ENCODE measurements at regions of chr20 and their contacts with region 1.

Region 1: DNA sequence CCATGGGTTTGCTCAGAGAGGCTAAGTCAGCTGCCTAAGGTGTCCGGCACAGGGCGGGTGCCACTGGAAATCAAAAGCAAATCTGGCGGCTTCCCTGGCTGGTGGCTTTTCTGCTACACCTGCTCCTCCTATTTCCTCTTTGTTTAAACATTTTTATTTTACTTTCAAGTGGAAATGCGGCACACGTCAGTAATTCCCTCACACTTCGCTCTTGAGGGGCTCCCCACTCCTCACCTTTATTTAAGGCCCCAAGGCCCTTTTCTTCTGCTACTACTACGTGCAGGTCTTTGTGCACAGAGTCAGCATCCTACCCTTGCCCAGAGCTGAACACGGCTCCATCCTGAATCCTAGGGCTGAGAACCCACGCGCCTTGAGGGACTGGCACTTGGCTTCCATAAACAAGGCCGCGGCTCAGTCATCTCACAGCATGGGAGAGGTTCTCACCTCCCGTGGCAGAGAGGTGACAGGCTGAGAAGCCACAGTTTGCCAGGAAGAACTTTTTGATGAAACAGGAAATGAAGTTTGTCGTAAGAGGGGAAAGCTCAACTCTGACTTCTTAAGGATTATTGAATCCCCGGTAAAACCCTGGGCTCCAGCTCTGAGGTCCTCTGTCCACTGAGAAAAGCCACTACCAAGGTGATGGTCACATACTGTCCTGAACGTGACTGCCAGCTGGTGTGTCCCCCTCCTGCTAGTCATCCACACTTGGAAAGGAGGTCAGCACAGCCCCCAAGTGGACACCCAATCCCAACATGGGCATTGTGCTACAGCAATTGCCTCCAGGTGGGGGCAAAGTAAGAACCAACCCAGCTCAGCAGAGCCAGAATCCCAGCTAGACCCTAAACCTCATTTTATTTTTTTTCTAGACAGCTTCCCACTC is 48.0 kb downstream of the NFATC2 start:
- DNase-seq: peak; percentile 61
- ATAC-seq: peak; percentile 40
- H3K4me3 Mint-ChIP-seq: peak overlapping the region; percentile 45
- H3K27ac Mint-ChIP-seq: peak overlapping the region; percentile 68
- H3K4me1 Mint-ChIP-seq: peaks cover 92% of the 10 kb centered on the region
- H3K27me3 Mint-ChIP-seq: no peaks in the 10 kb centered on the region

Region 2: GRCh38 chr20:51481341-51481914 is 13.1 kb before region 1 on chr20:
- CTCF ChIA-PET with region 1: interaction called, 10 read pairs
- DNase-seq: peak; percentile 76
- ATAC-seq: peak; percentile 52
- H3K4me3 Mint-ChIP-seq: peak overlapping the region; percentile 47
- H3K27ac Mint-ChIP-seq: peak overlapping the region; percentile 86
- H3K4me1 Mint-ChIP-seq: peaks cover 90% of the 10 kb centered on the region
- H3K27me3 Mint-ChIP-seq: no peaks in the 10 kb centered on the region